PC-9 (cell line): ENCODE measurements at regions of chr6 and their contacts with region 1.

Region 1: GRCh38 chr6:85404502-85405174 is 45.2 kb upstream of the NT5E start:
- DNase-seq: peak; percentile 60 to 73
- H3K4me3 ChIP-seq: no peak overlapping the region; the same call in 1 of the 2 replicates
- H3K27ac ChIP-seq: peak overlapping the region; percentile 75
- H3K4me1 ChIP-seq: peaks cover 51% of the 10 kb centered on the region
- H3K27me3 ChIP-seq: no peaks in the 10 kb centered on the region
- CTCF ChIP-seq: no peak

Region 2: GRCh38 chr6:85236636-85237035 is 168.0 kb before region 1 on chr6:
- CTCF ChIA-PET with region 1: interaction called, 27 read pairs
- POLR2A ChIA-PET with region 1: no interaction called
- intact Hi-C with region 1: no loop called
- DNase-seq: no peak
- H3K4me3 ChIP-seq: no peak overlapping the region
- H3K27ac ChIP-seq: no peak overlapping the region
- H3K4me1 ChIP-seq: no peaks in the 10 kb centered on the region
- H3K27me3 ChIP-seq: no peaks in the 10 kb centered on the region
- CTCF ChIP-seq: no peak

Region 3: DNA sequence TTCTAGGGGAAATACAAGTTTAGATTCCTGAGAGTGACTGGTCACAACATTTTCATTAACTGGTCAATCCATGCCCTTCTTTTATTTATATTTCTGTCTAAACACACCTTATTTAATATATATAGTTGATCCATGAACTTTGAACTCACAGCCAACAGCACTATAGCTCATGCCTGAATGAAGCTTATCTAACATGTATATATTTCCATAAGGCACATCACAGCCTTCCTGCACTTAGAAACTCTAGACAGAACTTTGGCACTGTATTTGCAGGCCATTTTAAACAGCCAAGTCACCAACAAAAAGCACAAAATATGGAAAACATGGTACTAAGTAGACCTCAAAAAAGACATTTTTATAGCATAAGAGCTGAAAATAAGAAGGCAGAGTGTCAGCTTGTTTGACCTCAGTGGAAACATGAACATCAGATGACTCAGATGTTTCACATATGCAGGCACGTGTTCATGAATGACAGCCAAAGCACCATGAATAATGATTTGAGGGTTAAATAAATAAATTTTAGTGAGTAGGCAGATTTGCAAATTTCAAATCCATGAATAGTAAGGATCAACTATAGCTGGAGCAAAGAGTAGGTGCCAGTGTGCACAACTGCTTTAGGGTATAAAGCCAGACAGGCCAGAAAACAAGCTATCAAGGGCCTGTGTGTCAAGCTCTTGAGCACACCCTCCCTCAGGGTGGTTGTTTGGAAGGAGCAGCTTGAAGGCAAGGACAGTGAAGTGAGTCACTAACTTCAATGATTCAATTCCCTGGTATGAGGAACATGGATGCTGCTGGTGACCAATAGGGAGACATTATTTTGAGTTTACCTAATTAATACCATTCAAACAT is 43.6 kb before region 1 on chr6:
- CTCF ChIA-PET with region 1: no interaction called
- POLR2A ChIA-PET with region 1: no interaction called
- intact Hi-C with region 1: loop called (anchors 1 kb)
- DNase-seq: peak; percentile 75 to 96
- H3K4me3 ChIP-seq: no peak overlapping the region
- H3K27ac ChIP-seq: peak overlapping the region; percentile 87
- H3K4me1 ChIP-seq: peaks cover 61% of the 10 kb centered on the region
- H3K27me3 ChIP-seq: no peaks in the 10 kb centered on the region
- CTCF ChIP-seq: no peak

Region 4: DNA sequence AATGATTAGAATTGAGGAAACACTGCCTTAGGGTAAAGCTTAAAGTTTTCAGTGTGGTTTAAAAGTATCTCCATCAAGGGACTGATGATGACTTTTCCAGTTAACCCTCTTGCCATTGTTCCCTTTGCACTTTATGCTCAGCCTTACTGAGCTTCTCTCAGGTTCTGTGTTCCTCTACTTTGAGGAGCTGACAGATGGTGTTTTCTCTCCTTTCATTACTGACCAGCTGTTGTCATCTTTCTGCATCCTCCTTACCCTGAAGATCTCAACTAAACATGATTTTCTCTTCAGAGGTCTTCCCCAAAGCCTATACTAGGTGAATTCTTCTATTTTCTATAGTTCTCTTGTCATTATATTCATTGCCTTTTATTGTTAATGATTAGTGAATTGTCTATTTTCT is 713.6 kb after region 1 on chr6:
- CTCF ChIA-PET with region 1: no interaction called
- POLR2A ChIA-PET with region 1: no interaction called
- intact Hi-C with region 1: no loop called
- DNase-seq: no peak
- H3K4me3 ChIP-seq: no peak overlapping the region
- H3K27ac ChIP-seq: no peak overlapping the region
- H3K4me1 ChIP-seq: no peaks in the 10 kb centered on the region
- H3K27me3 ChIP-seq: no peaks in the 10 kb centered on the region
- CTCF ChIP-seq: no peak